ENCODE measurements at regions of chr11 and their contacts with region 1.

Region 1: DNA sequence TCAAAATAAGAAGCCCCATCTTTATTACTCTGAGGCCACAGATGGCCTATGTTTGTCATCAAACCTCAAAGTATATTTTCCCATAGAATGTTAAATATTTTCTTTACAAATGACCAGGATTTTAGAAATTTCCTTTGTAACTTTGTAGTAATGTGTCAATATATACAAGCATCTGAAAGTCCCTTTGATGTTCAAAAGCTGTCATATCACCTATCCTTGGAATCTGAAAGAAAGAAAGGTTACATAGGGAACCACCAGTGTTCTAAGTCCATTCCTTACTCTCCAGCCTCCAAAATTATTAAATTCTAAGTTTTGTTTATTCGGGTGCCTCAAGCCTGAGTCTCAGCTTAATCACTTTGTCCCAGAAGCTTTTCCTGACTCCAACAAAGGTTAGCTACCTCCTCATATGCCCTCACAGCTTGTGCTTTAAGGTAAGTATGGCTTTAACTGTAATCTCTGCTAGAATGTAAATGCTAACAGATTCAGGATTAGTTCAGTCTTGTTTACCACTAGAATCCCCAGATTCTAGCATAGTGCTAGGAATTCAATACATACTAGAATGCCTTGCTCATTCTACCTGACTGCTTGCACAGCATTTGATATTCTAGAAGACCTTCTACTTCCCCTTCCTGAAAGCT is 32.3 kb downstream of the CCDC34 start:
- DNase-seq: no peak
- ATAC-seq: no peak
- H3K4me3 ChIP-seq: no peak overlapping the region
- H3K4me3 Mint-ChIP-seq: no peak overlapping the region
- H3K27ac ChIP-seq: no peak overlapping the region
- H3K27ac Mint-ChIP-seq: no peak overlapping the region
- H3K4me1 ChIP-seq: no peaks in the 10 kb centered on the region
- H3K4me1 Mint-ChIP-seq: no peaks in the 10 kb centered on the region
- H3K27me3 ChIP-seq: no peaks in the 10 kb centered on the region
- H3K27me3 Mint-ChIP-seq: no peaks in the 10 kb centered on the region

Region 2: DNA sequence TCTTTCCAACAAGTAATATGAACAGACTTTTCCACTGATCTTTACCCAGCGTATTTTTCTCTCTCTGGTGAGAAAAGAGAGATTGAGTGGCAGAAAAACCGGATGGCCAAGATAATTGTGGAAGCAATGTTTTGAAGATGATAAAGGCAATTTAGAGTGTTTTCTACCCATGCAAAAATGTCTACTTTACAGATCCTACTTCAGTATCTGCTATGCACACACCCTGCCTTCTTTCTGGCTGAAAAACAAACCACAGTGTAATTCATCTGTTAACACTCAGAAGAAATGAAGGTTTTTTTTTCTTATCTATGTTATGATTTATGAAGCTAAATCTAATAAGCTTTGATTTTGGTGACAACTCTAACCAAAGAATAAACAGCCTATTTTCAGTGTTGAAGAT is 665.7 kb before region 1 on chr11:
- CTCF ChIA-PET with region 1: no interaction called
- POLR2A ChIA-PET with region 1: interaction called in 1 of 2 experiments, 15 read pairs
- DNase-seq: no peak
- ATAC-seq: no peak
- H3K4me3 ChIP-seq: no peak overlapping the region
- H3K4me3 Mint-ChIP-seq: no peak overlapping the region
- H3K27ac ChIP-seq: no peak overlapping the region
- H3K27ac Mint-ChIP-seq: no peak overlapping the region
- H3K4me1 ChIP-seq: no peaks in the 10 kb centered on the region
- H3K4me1 Mint-ChIP-seq: no peaks in the 10 kb centered on the region
- H3K27me3 ChIP-seq: no peaks in the 10 kb centered on the region
- H3K27me3 Mint-ChIP-seq: no peaks in the 10 kb centered on the region

Region 3: GRCh38 chr11:27266125-27266524 is 64.6 kb before region 1 on chr11:
- CTCF ChIA-PET with region 1: no interaction called
- POLR2A ChIA-PET with region 1: no interaction called
- DNase-seq: no peak
- ATAC-seq: no peak
- H3K4me3 ChIP-seq: no peak overlapping the region
- H3K4me3 Mint-ChIP-seq: no peak overlapping the region
- H3K27ac ChIP-seq: no peak overlapping the region
- H3K27ac Mint-ChIP-seq: no peak overlapping the region
- H3K4me1 ChIP-seq: no peaks in the 10 kb centered on the region
- H3K4me1 Mint-ChIP-seq: no peaks in the 10 kb centered on the region
- H3K27me3 ChIP-seq: no peaks in the 10 kb centered on the region
- H3K27me3 Mint-ChIP-seq: peaks cover 0 to 1% of the 10 kb centered on the region in 2 donors

Measured in T-cell (primary cell).